ENCODE measurements at regions of chr2 and their contacts with region 1.

Region 1: GRCh38 chr2:224538561-224539154 is 46.5 kb downstream of the CUL3 start:
- DNase-seq: no peak
- H3K4me3 ChIP-seq: no peak overlapping the region
- H3K4me3 Mint-ChIP-seq: peak overlapping the region in 3 of 8 donors; percentile 1 to 11 (median 8)
- H3K27ac ChIP-seq: no peak overlapping the region
- H3K27ac Mint-ChIP-seq: peak overlapping the region in 3 of 7 donors; percentile 5 to 14 (median 12)
- H3K4me1 ChIP-seq: peaks cover 39% of the 10 kb centered on the region
- H3K4me1 Mint-ChIP-seq: peaks cover 40 to 65% (median 53%) of the 10 kb centered on the region in 4 donors
- H3K27me3 ChIP-seq: no peaks in the 10 kb centered on the region
- H3K27me3 Mint-ChIP-seq: no peaks in the 10 kb centered on the region

Region 2: GRCh38 chr2:224507789-224508188 is 30.9 kb before region 1 on chr2:
- CTCF ChIA-PET with region 1: no interaction called
- POLR2A ChIA-PET with region 1: interaction called, 4 read pairs
- intact Hi-C with region 1: loop called (anchors 5 kb)
- DNase-seq: no peak
- H3K4me3 ChIP-seq: no peak overlapping the region
- H3K4me3 Mint-ChIP-seq: no peak overlapping the region
- H3K27ac ChIP-seq: no peak overlapping the region
- H3K27ac Mint-ChIP-seq: no peak overlapping the region
- H3K4me1 ChIP-seq: no peaks in the 10 kb centered on the region
- H3K4me1 Mint-ChIP-seq: peaks cover 4 to 11% (median 7%) of the 10 kb centered on the region in 4 donors
- H3K27me3 ChIP-seq: no peaks in the 10 kb centered on the region
- H3K27me3 Mint-ChIP-seq: no peaks in the 10 kb centered on the region

Region 3: DNA sequence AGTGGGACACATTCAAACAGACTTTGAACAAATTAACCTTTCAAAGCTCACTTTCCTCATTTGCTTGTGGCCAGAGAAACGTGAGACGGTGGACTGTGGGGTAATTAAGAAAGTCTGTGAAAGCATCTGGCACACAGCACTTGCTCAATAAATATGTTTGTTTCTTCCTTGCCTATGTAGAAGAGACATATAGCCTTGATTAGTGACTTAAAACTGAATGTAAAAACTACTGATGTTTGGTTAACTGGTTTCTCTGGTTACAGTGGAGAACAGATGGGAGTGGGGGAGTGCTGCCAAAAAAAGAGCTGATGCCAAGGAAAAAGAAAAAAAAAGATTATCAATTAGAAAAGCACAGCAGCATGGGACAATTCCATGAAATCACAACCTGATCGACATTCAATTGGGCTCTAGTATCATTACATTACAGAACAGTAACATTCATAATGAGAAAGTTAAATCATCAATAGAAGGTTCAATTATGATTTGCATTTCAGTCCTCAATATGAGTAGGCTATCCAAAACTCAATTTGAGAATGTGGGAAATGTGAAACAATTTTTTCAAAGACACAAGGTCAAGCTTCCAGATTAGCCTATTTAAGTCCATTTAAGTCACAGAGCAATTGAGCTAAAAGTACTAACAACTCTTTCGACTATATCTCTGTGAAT is 31.8 kb after region 1 on chr2:
- CTCF ChIA-PET with region 1: no interaction called
- POLR2A ChIA-PET with region 1: no interaction called
- intact Hi-C with region 1: loop called (anchors 5 kb)
- DNase-seq: no peak
- H3K4me3 ChIP-seq: no peak overlapping the region
- H3K4me3 Mint-ChIP-seq: peak overlapping the region in 7 of 8 donors; percentile 18 to 76 (median 61)
- H3K27ac ChIP-seq: no peak overlapping the region
- H3K27ac Mint-ChIP-seq: peak overlapping the region in 3 of 7 donors; percentile 31 to 44 (median 43)
- H3K4me1 ChIP-seq: peaks cover 87% of the 10 kb centered on the region
- H3K4me1 Mint-ChIP-seq: peaks cover 63 to 89% (median 72%) of the 10 kb centered on the region in 4 donors
- H3K27me3 ChIP-seq: no peaks in the 10 kb centered on the region
- H3K27me3 Mint-ChIP-seq: no peaks in the 10 kb centered on the region

Measured in CD4-positive, alpha-beta memory T cell (primary cell).